Ovary (tissue), 10 donors: ENCODE measurements at regions of chr7 and their contacts with region 1.

Region 1: DNA sequence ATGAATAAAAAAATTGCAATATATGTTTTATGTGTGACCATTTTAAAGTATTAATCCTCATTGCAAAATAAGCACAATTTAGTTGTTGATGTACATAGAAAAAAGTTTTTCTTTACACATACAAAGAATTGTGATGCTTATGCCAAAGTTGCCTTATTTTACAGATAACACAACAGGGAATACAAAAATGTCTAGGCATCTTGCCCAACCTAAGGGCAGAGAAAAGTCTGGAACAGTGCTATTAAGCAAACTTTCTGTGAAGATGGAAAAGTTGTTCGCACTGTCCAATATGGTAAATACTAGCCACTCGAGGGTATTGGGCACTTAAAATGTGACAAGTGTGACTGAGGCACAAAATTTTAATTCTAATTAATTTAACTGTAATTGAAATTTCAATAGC is 190.2 kb upstream of the HGF start:
- DNase-seq: no peak
- H3K4me3 ChIP-seq: no peak overlapping the region
- H3K27ac ChIP-seq: no peak overlapping the region
- H3K4me1 ChIP-seq: no peaks in the 10 kb centered on the region
- H3K27me3 ChIP-seq: no peaks in the 10 kb centered on the region
- CTCF ChIP-seq: no peak
- EP300 ChIP-seq: no peak
- POLR2A ChIP-seq: no peak

Region 2: DNA sequence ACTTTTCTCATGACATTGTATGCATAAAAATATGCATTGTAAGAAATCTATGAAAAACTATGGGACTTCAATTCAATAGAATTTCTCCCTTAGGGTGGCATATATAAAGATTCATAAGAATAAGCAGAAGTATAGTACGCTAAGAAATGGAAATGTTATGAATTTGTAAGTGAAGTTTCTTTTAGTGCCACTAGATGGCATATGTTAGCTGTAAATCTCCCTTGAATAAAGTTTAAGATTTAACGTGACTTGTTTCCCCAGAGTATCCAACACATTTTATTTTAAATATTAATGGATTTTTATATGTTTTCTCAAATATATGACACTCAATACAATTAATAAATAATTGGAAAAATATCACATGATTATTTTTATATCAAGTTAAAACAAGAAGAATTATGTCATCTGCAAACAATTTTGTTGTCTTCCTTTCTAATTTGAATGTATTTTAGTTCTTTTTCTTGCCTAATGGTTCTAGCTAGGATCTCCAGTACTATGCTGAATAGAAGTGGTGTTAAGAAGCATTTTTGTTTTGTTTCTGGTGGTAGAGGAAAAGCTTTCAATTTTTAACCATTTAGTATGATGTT is 477.3 kb before region 1 on chr7:
- intact Hi-C with region 1: loop called in 1 of 4 experiments (anchors 10 kb)
- DNase-seq: no peak
- H3K4me3 ChIP-seq: no peak overlapping the region
- H3K27ac ChIP-seq: no peak overlapping the region
- H3K4me1 ChIP-seq: no peaks in the 10 kb centered on the region
- H3K27me3 ChIP-seq: no peaks in the 10 kb centered on the region
- CTCF ChIP-seq: peak; percentile 10 to 36 (median 26)
- EP300 ChIP-seq: no peak
- POLR2A ChIP-seq: no peak

Region 3: DNA sequence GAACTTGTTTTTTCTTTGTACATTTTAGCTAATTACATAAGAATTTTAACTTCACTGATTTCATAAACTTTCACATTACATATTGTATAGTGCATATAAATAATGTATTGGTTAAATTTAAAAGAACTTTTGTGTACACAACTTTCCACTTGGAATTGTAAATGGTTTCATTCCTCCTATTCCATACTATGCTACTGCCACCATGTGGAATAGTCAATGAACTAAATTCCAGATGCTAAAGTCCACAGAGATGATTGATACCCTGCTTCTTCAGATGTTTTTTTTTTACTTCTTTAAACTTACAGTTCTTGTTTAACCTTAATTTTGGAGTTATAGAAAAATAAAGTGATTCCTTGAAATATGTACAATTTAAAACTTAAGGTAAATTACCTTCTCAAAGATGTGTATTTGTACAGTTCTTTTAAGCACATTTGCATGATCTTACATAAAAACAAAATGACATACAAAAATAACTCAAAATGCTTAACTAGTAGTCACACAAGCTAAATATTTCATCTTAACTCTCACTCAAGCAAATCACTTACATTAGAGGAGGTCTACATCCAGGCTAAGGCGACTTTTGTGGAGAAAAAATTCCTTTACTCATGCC is 57.4 kb after region 1 on chr7:
- intact Hi-C with region 1: no loop called
- DNase-seq: no peak
- H3K4me3 ChIP-seq: no peak overlapping the region
- H3K27ac ChIP-seq: no peak overlapping the region
- H3K4me1 ChIP-seq: no peaks in the 10 kb centered on the region
- H3K27me3 ChIP-seq: no peaks in the 10 kb centered on the region
- CTCF ChIP-seq: no peak
- EP300 ChIP-seq: no peak
- POLR2A ChIP-seq: no peak